HCT116 (cell line): ENCODE measurements at regions of chr15 and their contacts with region 1.

Region 1: GRCh38 chr15:67109141-67110034 is 44.0 kb downstream of the SMAD3 start:
- DNase-seq: no peak
- ATAC-seq: 0 out of 2 replicates have a peak, but pooled peaks have one; percentile 6
- H3K4me3 ChIP-seq: no peak overlapping the region
- H3K27ac ChIP-seq: peak overlapping the region; percentile 48
- H3K4me1 ChIP-seq: peaks cover 71 to 91% of the 10 kb centered on the region in 2 experiments
- H3K27me3 ChIP-seq: no peaks in the 10 kb centered on the region
- CTCF ChIP-seq: no peak
- POLR2A ChIP-seq: no peak
- RAD21 ChIP-seq: no peak

Region 2: GRCh38 chr15:67150028-67150860 is 40.9 kb after region 1 on chr15:
- CTCF ChIA-PET with region 1: no interaction called
- POLR2A ChIA-PET with region 1: interaction called, 5 read pairs
- RAD21 ChIA-PET with region 1: interaction called in 1 of 2 experiments, 3 read pairs
- intact Hi-C with region 1: loop called (anchors 1 kb)
- DNase-seq: peak; percentile 96
- ATAC-seq: peak; percentile 85
- H3K4me3 ChIP-seq: peak overlapping the region; percentile 7 to 30
- H3K27ac ChIP-seq: peak overlapping the region; percentile 84
- H3K4me1 ChIP-seq: peaks cover 67 to 95% of the 10 kb centered on the region in 2 experiments
- H3K27me3 ChIP-seq: no peaks in the 10 kb centered on the region
- CTCF ChIP-seq: no peak
- POLR2A ChIP-seq: no peak
- RAD21 ChIP-seq: no peak

Region 3: GRCh38 chr15:67303490-67304363 is 194.3 kb after region 1 on chr15:
- CTCF ChIA-PET with region 1: interaction called, 6 read pairs
- POLR2A ChIA-PET with region 1: no interaction called
- RAD21 ChIA-PET with region 1: no interaction called
- intact Hi-C with region 1: loop called (anchors 10 kb)
- DNase-seq: peak; percentile 42
- ATAC-seq: peak; percentile 91
- H3K4me3 ChIP-seq: no peak overlapping the region
- H3K27ac ChIP-seq: no peak overlapping the region
- H3K4me1 ChIP-seq: no peaks in the 10 kb centered on the region
- H3K27me3 ChIP-seq: no peaks in the 10 kb centered on the region
- CTCF ChIP-seq: peak; percentile 46 to 82 (median 65)
- POLR2A ChIP-seq: no peak
- RAD21 ChIP-seq: peak; percentile 87

Region 4: DNA sequence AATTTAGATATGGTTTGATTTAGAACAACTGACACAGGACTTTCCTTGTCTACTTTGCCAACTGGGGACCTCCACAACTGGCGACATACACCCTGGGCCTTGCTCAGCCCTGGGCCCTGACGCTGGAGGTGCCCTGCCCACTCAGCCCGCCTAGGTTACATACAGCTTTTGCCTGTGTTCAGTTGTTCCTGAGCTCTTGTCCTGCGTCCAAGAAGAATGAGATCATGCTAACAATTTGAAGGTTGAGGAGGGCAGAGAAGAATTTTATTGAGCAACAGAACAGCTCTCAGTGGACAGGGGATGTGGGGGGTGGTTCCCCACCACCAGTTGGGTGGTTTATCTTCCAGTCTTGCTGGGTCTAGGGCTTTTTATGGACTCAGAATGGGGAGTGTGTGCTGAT is 213.1 kb after region 1 on chr15:
- CTCF ChIA-PET with region 1: no interaction called
- POLR2A ChIA-PET with region 1: no interaction called
- RAD21 ChIA-PET with region 1: no interaction called
- intact Hi-C with region 1: no loop called
- DNase-seq: no peak
- ATAC-seq: no peak
- H3K4me3 ChIP-seq: no peak overlapping the region
- H3K27ac ChIP-seq: no peak overlapping the region
- H3K4me1 ChIP-seq: no peaks in the 10 kb centered on the region
- H3K27me3 ChIP-seq: no peaks in the 10 kb centered on the region
- CTCF ChIP-seq: no peak
- POLR2A ChIP-seq: no peak
- RAD21 ChIP-seq: no peak